Psoas muscle (tissue), 8 donors: ENCODE measurements at regions of chr1 and their contacts with region 1.

Region 1: GRCh38 chr1:117605774-117606648 is at the start of gene TENT5C:
- DNase-seq: peak; percentile 97 to 98
- ATAC-seq: peak; percentile 94 to 98 (median 95)
- H3K4me3 ChIP-seq: peak within 1 kb of the TSS; percentile 93
- H3K27ac ChIP-seq: peak within 1 kb of the TSS; percentile 91
- H3K4me1 ChIP-seq: peaks cover 11% of the 10 kb centered on the region
- H3K27me3 ChIP-seq: no peaks in the 10 kb centered on the region
- CTCF ChIP-seq: peak; percentile 7
- total RNA-seq, gene TENT5C: 3.1 to 31.4 (median 15.9) TPM

Region 2: GRCh38 chr1:117534995-117535467 is 71.0 kb before region 1 on chr1:
- intact Hi-C with region 1: no loop called
- DNase-seq: no peak
- ATAC-seq: peak; percentile 81 to 95 (median 88)
- H3K4me3 ChIP-seq: no peak overlapping the region
- H3K27ac ChIP-seq: no peak overlapping the region
- H3K4me1 ChIP-seq: no peaks in the 10 kb centered on the region
- H3K27me3 ChIP-seq: no peaks in the 10 kb centered on the region
- CTCF ChIP-seq: peak; percentile 73

Region 3: GRCh38 chr1:117644696-117645311 is 38.8 kb after region 1 on chr1:
- intact Hi-C with region 1: loop called in 1 of 2 experiments (anchors 5 kb)
- DNase-seq: no peak
- ATAC-seq: peak in 2 of 4 donors; percentile 34 to 67
- H3K4me3 ChIP-seq: no peak overlapping the region
- H3K27ac ChIP-seq: peak overlapping the region; percentile 17
- H3K4me1 ChIP-seq: peaks cover 27% of the 10 kb centered on the region
- H3K27me3 ChIP-seq: no peaks in the 10 kb centered on the region
- CTCF ChIP-seq: no peak

Region 4: DNA sequence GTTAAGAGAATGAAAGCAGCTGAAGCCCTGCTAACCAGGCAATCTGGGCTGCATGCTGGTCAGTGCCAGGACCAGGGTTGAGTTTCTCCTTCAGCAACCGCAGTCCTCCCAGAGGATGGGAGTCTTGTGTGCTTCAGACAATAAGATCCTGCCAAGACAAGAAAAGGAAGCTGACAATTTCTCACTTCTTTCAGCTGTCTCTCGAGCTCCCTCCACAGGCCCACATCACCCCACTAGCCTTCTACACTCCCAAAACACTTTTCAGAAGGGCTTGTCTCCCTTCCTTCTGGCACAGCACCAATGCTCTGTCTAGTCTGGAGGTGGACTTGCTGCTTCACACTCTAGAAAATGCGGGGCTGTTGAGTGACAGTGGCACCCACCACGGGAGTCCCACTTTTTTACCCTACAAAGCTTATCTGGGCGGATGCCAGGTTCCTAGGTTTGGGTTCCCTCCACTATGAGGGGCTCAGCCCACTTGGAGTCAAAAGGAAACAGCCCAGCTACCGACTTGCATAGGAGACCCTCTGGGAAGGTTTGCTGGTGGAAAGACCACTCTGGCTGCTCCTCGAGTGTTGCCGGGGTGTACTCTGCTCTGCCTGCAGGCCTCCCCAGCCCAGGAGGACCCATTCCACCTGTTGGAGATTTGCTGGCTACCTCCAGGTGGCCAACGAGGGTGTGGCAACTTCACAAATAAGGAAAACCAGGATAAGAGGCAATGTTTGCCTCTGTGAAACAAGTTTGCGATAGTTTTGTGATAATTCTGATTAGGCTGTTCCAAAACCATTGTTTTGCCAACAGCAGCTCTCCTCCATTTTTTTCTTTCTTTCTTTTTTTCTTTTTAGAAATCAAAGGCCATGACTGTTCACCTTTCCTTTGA is 68.7 kb after region 1 on chr1:
- intact Hi-C with region 1: loop called in 1 of 2 experiments (anchors 5 kb)
- DNase-seq: no peak
- ATAC-seq: peak in 3 of 4 donors; percentile 16 to 27 (median 21)
- H3K4me3 ChIP-seq: no peak overlapping the region
- H3K27ac ChIP-seq: peak overlapping the region; percentile 37
- H3K4me1 ChIP-seq: peaks cover 57% of the 10 kb centered on the region
- H3K27me3 ChIP-seq: no peaks in the 10 kb centered on the region
- CTCF ChIP-seq: peak; percentile 22

Region 5: GRCh38 chr1:117685936-117686806 is 80.2 kb after region 1 on chr1:
- intact Hi-C with region 1: loop called in 1 of 2 experiments (anchors 5 kb)
- DNase-seq: peak in 1 of 2 donors; percentile 65
- ATAC-seq: peak in 3 of 4 donors; percentile 63 to 82 (median 74)
- H3K4me3 ChIP-seq: no peak overlapping the region
- H3K27ac ChIP-seq: peak overlapping the region; percentile 78
- H3K4me1 ChIP-seq: peaks cover 49% of the 10 kb centered on the region
- H3K27me3 ChIP-seq: no peaks in the 10 kb centered on the region
- CTCF ChIP-seq: peak; percentile 11